PC-3 (cell line): ENCODE measurements at regions of chr17 and their contacts with region 1.

Region 1: DNA sequence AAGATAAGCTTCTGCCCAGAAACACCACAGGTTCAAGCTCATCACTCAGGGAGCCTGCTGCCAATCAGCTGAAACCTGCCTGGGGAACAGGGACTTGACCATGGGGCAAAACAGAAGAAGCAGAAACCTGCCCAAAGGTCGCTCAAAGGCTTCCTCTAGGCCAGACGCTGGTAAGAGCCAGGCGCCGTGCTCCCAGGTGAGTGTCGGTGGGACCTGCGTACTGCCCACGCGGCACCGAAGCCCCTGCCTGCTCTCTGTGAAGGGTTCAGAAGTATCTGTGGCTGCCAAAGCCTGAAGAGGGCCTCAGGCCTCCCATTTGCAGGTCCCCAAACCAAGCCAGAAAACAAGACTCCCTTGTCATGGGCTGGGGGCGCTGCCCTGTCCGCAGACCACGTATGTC is 10.4 kb downstream of the SGSH start:
- DNase-seq: no peak
- ATAC-seq: no peak
- H3K4me3 ChIP-seq: no peak overlapping the region
- H3K27ac ChIP-seq: no peak overlapping the region
- H3K4me1 ChIP-seq: no peaks in the 10 kb centered on the region
- H3K27me3 ChIP-seq: no peaks in the 10 kb centered on the region
- CTCF ChIP-seq: no peak

Region 2: GRCh38 chr17:80173916-80174315 is 35.8 kb before region 1 on chr17:
- CTCF ChIA-PET with region 1: no interaction called
- POLR2A ChIA-PET with region 1: interaction called, 10 read pairs
- intact Hi-C with region 1: no loop called
- DNase-seq: no peak
- ATAC-seq: no peak
- H3K4me3 ChIP-seq: no peak overlapping the region
- H3K27ac ChIP-seq: no peak overlapping the region
- H3K4me1 ChIP-seq: peaks cover 10% of the 10 kb centered on the region
- H3K27me3 ChIP-seq: no peaks in the 10 kb centered on the region
- CTCF ChIP-seq: no peak

Region 3: DNA sequence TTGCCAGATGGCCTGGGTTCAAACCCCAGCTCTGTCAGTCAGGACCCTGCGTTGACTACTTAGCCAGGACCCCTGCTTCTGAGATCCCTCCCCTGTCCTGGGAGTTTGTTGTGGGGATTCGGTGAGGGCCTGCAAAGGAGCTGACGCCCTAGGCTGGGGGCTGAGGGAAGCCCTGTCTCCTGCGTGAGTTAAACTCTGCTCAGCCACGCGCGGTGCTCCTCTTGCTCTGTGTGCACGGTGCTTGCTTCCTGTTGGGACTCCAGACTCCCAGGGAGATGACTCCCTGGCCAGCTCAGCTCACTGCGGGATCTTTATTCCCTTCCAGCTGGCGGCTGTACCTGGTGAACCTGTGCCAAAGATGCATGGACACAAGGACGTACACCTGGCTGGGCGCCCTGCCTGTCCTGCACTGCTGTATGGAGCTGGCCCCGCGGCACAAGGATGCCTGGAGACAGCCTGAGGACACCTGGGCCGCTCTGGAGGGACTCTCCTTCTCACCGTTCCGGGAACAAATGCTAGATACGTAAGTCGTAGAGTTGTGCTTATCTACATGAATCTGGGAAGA is 88.3 kb after region 1 on chr17:
- CTCF ChIA-PET with region 1: no interaction called
- POLR2A ChIA-PET with region 1: no interaction called
- intact Hi-C with region 1: no loop called
- DNase-seq: no peak
- ATAC-seq: no peak
- H3K4me3 ChIP-seq: no peak overlapping the region
- H3K27ac ChIP-seq: no peak overlapping the region
- H3K4me1 ChIP-seq: no peaks in the 10 kb centered on the region
- H3K27me3 ChIP-seq: no peaks in the 10 kb centered on the region
- CTCF ChIP-seq: no peak

Region 4: DNA sequence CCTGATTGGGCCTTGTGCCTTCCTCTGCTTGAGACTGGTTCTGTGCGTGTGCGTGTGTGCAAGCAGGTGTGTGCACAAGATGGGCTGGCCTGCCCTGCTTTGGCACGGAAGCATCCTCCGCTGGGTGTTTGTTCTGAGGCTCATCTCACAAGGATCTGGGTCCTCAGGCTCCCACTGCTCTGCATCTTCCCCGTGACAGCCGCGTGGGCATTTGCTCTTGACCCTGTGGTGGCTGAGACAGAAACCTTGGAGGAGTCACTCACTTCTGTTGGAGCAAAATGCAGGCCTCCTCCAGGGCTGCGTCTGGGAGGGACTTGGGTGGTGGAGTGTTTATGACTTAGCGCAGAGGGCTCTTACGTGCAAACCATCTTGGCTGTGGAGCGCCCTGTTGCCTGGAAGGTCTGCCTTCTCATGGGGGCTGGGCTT is 454.0 kb after region 1 on chr17:
- CTCF ChIA-PET with region 1: no interaction called
- POLR2A ChIA-PET with region 1: no interaction called
- intact Hi-C with region 1: no loop called
- DNase-seq: no peak
- ATAC-seq: no peak
- H3K4me3 ChIP-seq: no peak overlapping the region
- H3K27ac ChIP-seq: no peak overlapping the region
- H3K4me1 ChIP-seq: no peaks in the 10 kb centered on the region
- H3K27me3 ChIP-seq: no peaks in the 10 kb centered on the region
- CTCF ChIP-seq: no peak